Mammary epithelial cell (primary cell): ENCODE measurements at regions of chr20 and their contacts with region 1.

Region 1: GRCh38 chr20:31968291-31969126 is 558 bp downstream of the XKR7 start:
- DNase-seq: peak; percentile 48
- H3K4me3 ChIP-seq: no peak overlapping the region
- H3K27ac ChIP-seq: no peak overlapping the region
- H3K4me1 ChIP-seq: no peaks in the 10 kb centered on the region
- H3K27me3 ChIP-seq: peaks cover 17% of the 10 kb centered on the region
- CTCF ChIP-seq: no peak

Region 2: GRCh38 chr20:31894980-31895675 is 73.4 kb before region 1 on chr20:
- CTCF ChIA-PET with region 1: no interaction called
- dilution Hi-C with region 1: no loop called
- in situ Hi-C with region 1: no loop called
- intact Hi-C with region 1: no loop called
- DNase-seq: peak; percentile 48
- H3K4me3 ChIP-seq: no peak overlapping the region
- H3K27ac ChIP-seq: no peak overlapping the region
- H3K4me1 ChIP-seq: no peaks in the 10 kb centered on the region
- H3K27me3 ChIP-seq: no peaks in the 10 kb centered on the region
- CTCF ChIP-seq: no peak

Region 3: DNA sequence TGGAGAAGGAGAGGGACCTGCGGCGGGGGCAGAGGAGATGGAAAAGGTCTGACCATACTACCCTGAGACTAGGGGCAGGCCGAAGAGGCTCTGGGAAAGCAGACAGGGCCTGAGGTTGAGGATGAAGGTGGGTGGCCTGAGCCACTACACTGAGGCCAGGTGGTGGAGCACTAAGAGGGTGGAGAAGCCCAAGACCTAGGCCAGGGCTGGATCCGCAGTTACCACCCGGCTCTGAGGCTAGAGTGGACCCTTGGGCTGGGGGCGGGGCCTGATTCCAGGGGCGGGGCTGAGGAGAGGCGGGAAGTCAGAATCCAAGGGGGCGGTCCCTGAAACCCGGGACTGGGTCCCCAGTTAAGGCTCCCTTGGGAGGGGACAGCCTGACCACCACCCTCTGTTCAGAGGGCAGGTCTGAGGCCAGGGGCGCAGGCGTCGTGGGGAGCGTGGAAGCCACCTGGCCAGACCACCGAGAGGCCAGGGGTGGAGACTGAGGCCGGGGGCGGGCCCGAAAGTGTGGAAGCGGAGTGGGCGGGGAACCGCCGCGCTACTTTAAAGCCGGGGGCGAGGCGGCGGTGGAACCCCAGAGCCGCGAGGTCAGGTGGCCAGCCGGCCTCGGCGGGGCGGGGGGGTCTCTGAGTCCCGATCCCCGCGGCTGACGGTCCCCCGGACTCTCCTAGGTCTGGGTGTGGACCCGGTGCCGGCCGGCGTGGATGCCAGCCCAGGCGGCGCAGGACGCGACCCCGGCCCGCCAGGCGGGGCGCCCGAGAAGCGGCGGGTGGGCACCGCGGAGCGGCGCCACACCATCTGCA is 50.0 kb after region 1 on chr20:
- CTCF ChIA-PET with region 1: no interaction called
- dilution Hi-C with region 1: no loop called
- in situ Hi-C with region 1: no loop called
- intact Hi-C with region 1: loop called (anchors 5 kb)
- DNase-seq: peak; percentile 19
- H3K4me3 ChIP-seq: peak overlapping the region; percentile 20 to 49 (median 40)
- H3K27ac ChIP-seq: no peak overlapping the region
- H3K4me1 ChIP-seq: peaks cover 10% of the 10 kb centered on the region
- H3K27me3 ChIP-seq: peaks cover 23% of the 10 kb centered on the region
- CTCF ChIP-seq: no peak

Region 4: DNA sequence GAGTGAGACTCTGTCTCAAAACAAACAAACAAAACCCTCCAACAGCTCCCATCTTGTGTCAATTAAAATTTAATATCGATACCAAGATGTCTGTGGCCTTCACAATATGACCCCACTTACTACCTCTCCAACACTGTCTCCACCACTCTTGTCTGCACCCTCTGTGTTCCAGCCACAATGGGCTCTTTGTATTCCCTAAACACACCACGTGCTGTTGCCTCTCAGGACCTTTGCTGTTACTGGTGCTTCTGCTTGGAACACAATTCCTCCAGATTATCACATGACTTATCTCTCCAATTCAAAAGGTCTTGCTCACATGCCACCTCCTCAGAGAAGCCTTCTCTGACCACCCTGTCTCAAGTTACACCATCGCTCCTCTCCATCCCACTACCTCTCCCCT is 77.5 kb after region 1 on chr20:
- CTCF ChIA-PET with region 1: no interaction called
- dilution Hi-C with region 1: loop called (anchors 5 kb)
- in situ Hi-C with region 1: no loop called
- intact Hi-C with region 1: no loop called
- DNase-seq: no peak
- H3K4me3 ChIP-seq: no peak overlapping the region
- H3K27ac ChIP-seq: no peak overlapping the region
- H3K4me1 ChIP-seq: no peaks in the 10 kb centered on the region
- H3K27me3 ChIP-seq: peaks cover 1% of the 10 kb centered on the region
- CTCF ChIP-seq: no peak

Region 5: DNA sequence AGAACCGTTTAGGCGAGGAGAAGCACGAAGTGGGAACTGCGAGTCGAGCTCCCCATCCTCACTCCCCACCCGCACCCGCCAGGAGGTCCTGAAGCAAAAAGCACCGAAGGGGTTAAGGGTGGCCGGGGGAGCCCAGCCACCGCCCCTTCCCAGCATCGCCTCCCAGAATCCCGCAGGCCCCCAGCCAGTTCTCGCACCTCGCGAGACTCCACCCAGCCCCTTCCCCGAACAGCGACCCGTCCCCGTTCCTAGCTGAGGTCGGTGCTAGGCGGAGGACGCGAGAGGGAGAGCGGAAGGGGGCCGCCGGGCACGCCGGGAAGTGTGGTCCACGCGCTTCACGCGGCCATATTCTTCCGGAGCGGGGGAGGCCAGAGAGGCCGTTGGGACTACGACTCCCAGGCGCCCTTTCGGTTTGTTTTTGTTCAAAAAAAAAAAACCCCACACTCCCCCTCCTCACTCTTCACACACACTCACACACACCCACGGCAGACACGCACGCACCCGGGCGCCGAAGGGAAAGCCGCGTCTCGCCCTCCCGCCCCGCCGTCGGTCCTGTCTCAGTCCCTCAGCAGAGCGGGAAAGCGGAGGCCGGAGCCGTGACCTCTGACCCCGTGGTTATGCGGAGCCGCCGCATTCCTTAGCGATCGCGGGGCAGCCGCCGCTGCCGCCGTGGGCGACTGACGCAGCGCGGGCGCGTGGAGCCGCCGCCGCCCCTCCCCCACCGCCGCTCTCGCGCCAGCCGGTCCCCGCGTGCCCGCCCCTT is 389.5 kb after region 1 on chr20 and contains the start of gene ASXL1:
- CTCF ChIA-PET with region 1: no interaction called
- dilution Hi-C with region 1: no loop called
- in situ Hi-C with region 1: no loop called
- intact Hi-C with region 1: no loop called
- DNase-seq: peak; percentile 91
- H3K4me3 ChIP-seq: peak within 1 kb of the TSS; percentile 61 to 70 (median 64)
- H3K27ac ChIP-seq: peak within 1 kb of the TSS; percentile 76
- H3K4me1 ChIP-seq: peaks cover 38% of the 10 kb centered on the region
- H3K27me3 ChIP-seq: no peaks in the 10 kb centered on the region
- CTCF ChIP-seq: no peak
- total RNA-seq, gene ASXL1: 37.2 to 60.1 TPM